H1 (cell line): ENCODE measurements at regions of chr1 and their contacts with region 1.

Region 1: GRCh38 chr1:80155371-80155770 is 1148.8 kb upstream of the ADGRL4 start:
- DNase-seq: no peak
- H3K4me3 ChIP-seq: no peak overlapping the region
- H3K27ac ChIP-seq: no peak overlapping the region
- H3K4me1 ChIP-seq: peaks cover 0 to 6% (median 0%) of the 10 kb centered on the region in 4 experiments; a peak in 2 of 7 replicates
- H3K27me3 ChIP-seq: no peaks in the 10 kb centered on the region
- CTCF ChIP-seq: peak in 2 of 3 experiments; percentile 38 to 72; a peak in 2 of 4 replicates
- EP300 ChIP-seq: no peak
- POLR2A ChIP-seq: no peak
- RAD21 ChIP-seq: peak; percentile 66 to 73

Region 2: GRCh38 chr1:80036690-80037432 is 118.5 kb before region 1 on chr1:
- CTCF ChIA-PET with region 1: no interaction called
- POLR2A ChIA-PET with region 1: no interaction called
- DNase-seq: no peak
- H3K4me3 ChIP-seq: no peak overlapping the region
- H3K27ac ChIP-seq: no peak overlapping the region
- H3K4me1 ChIP-seq: no peaks in the 10 kb centered on the region
- H3K27me3 ChIP-seq: no peaks in the 10 kb centered on the region
- CTCF ChIP-seq: no peak
- EP300 ChIP-seq: no peak
- POLR2A ChIP-seq: no peak
- RAD21 ChIP-seq: no peak

Region 3: DNA sequence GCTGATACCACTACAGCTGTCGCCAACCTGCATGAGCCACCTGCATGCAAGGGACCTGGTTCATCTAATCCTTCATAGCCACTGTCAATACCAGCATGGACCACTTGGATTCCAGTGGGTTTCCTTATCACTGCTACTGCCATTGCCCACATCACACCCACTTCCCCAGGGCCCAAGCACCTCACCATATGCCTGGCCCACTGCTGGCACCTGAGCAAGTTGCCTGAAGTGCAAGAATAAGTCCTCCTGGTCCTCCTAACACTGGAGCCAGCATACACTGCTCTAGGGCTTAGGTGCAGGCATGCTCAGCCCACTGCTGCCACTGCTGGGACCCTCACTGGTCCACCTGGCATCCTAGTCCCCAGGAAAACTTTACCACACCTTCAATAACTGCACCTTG is 12.0 kb before region 1 on chr1:
- CTCF ChIA-PET with region 1: interaction called, 16 read pairs
- POLR2A ChIA-PET with region 1: no interaction called
- DNase-seq: no peak
- H3K4me3 ChIP-seq: no peak overlapping the region
- H3K27ac ChIP-seq: no peak overlapping the region
- H3K4me1 ChIP-seq: no peaks in the 10 kb centered on the region
- H3K27me3 ChIP-seq: no peaks in the 10 kb centered on the region
- CTCF ChIP-seq: no peak
- EP300 ChIP-seq: no peak
- POLR2A ChIP-seq: no peak
- RAD21 ChIP-seq: no peak

Region 4: GRCh38 chr1:80170811-80171485 is 15.6 kb after region 1 on chr1:
- CTCF ChIA-PET with region 1: interaction called, 36 read pairs
- POLR2A ChIA-PET with region 1: no interaction called
- DNase-seq: no peak
- H3K4me3 ChIP-seq: no peak overlapping the region
- H3K27ac ChIP-seq: no peak overlapping the region
- H3K4me1 ChIP-seq: no peaks in the 10 kb centered on the region
- H3K27me3 ChIP-seq: no peaks in the 10 kb centered on the region
- CTCF ChIP-seq: no peak
- EP300 ChIP-seq: no peak
- POLR2A ChIP-seq: no peak
- RAD21 ChIP-seq: no peak